Activated CD4-positive, alpha-beta memory T cell treated with anti-CD3 and anti-CD28 coated beads for 36 hours (primary cell): ENCODE measurements at regions of chr2 and their contacts with region 1.

Region 1: GRCh38 chr2:143162123-143162837 is 33.1 kb downstream of the ARHGAP15 start:
- DNase-seq: peak; percentile 68
- H3K4me3 Mint-ChIP-seq: no peak overlapping the region
- H3K27ac Mint-ChIP-seq: peak overlapping the region; percentile 14
- H3K4me1 Mint-ChIP-seq: peaks cover 77% of the 10 kb centered on the region
- H3K27me3 Mint-ChIP-seq: no peaks in the 10 kb centered on the region

Region 2: GRCh38 chr2:143110758-143111428 is 51.4 kb before region 1 on chr2:
- CTCF ChIA-PET with region 1: interaction called, 44 read pairs
- POLR2A ChIA-PET with region 1: interaction called, 5 read pairs
- intact Hi-C with region 1: loop called (anchors 1 kb)
- DNase-seq: peak; percentile 70
- H3K4me3 Mint-ChIP-seq: peak overlapping the region; percentile 56
- H3K27ac Mint-ChIP-seq: peak overlapping the region; percentile 86
- H3K4me1 Mint-ChIP-seq: peaks cover 31% of the 10 kb centered on the region
- H3K27me3 Mint-ChIP-seq: no peaks in the 10 kb centered on the region

Region 3: DNA sequence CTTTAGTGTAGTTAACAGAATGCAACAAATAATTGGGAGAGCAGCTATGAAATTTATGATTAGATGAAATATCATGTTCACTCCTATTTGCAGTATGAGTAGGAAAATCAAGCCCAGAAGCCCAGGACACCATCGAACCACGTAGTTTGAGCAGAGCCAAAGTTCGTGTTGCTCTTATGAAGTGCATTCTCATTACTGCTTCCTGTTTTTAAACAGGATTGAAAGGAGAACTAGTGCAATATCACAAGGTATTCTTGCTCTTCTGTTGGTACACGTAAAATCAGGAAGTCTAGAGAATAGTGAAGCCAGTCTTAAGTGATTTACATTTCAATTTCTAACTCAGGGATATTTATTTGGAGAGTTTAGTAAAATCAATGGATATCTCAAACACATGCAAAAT is 12.0 kb before region 1 on chr2:
- CTCF ChIA-PET with region 1: interaction called, 14 read pairs
- POLR2A ChIA-PET with region 1: interaction called, 3 read pairs
- intact Hi-C with region 1: no loop called
- DNase-seq: peak; percentile 27
- H3K4me3 Mint-ChIP-seq: peak overlapping the region; percentile 40
- H3K27ac Mint-ChIP-seq: peak overlapping the region; percentile 72
- H3K4me1 Mint-ChIP-seq: peaks cover 86% of the 10 kb centered on the region
- H3K27me3 Mint-ChIP-seq: no peaks in the 10 kb centered on the region

Region 4: DNA sequence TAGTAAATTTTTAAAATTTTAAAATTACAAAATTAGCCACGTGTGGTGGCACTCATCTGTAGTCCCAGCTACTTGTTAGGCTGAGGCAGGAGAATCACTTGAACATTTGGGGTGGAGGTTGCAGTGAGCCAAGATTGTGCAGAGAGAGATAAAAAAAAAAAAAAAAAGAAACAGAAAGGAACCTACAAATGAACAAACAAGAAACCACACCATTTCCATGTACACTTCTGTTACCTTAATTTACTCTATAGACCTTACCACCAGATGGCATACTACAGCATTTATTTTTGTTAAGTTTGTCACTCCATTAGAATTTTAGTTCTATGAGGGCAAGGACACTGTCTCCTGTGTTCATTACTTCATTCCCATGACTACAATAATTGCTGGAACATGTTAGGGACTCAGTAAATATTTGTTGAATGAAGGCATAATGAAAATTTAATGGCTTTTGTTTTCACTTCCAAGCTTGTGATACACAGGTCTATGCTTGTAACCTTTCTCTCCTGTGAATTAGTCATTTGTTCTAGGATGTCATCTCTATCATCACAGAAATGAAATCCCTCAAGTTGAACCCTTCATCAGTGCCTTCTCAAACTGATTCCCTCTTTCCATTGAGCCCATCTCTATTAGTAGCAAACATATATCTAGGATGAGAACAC is 43.0 kb after region 1 on chr2:
- CTCF ChIA-PET with region 1: interaction called, 15 read pairs
- POLR2A ChIA-PET with region 1: no interaction called
- intact Hi-C with region 1: no loop called
- DNase-seq: no peak
- H3K4me3 Mint-ChIP-seq: no peak overlapping the region
- H3K27ac Mint-ChIP-seq: peak overlapping the region; percentile 63
- H3K4me1 Mint-ChIP-seq: peaks cover 41% of the 10 kb centered on the region
- H3K27me3 Mint-ChIP-seq: no peaks in the 10 kb centered on the region

Region 5: GRCh38 chr2:143226714-143227541 is 64.6 kb after region 1 on chr2:
- CTCF ChIA-PET with region 1: interaction called, 43 read pairs
- POLR2A ChIA-PET with region 1: interaction called, 3 read pairs
- intact Hi-C with region 1: loop called (anchors 1 kb)
- DNase-seq: no peak
- H3K4me3 Mint-ChIP-seq: no peak overlapping the region
- H3K27ac Mint-ChIP-seq: no peak overlapping the region
- H3K4me1 Mint-ChIP-seq: peaks cover 38% of the 10 kb centered on the region
- H3K27me3 Mint-ChIP-seq: no peaks in the 10 kb centered on the region

Region 6: DNA sequence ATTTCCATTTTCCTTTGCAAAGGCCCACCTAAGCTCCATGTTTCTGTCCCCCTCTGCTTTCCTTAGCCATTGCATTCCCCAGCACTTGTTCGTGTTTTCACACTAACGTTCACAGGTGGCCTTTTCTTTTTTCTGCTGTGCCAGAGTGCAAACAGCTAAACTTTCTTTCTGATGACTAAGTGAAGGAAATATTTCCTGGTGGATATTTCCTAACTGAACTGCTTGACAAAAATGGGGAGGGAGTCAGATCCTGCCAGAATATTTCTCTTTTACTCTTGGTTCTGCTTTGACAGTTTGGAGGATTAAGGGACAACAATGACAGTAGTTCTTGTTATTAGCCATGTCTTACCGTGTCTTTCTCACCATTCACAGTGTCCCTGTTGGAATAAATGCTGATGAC is 310.9 kb after region 1 on chr2:
- CTCF ChIA-PET with region 1: no interaction called
- POLR2A ChIA-PET with region 1: no interaction called
- intact Hi-C with region 1: no loop called
- DNase-seq: no peak
- H3K4me3 Mint-ChIP-seq: no peak overlapping the region
- H3K27ac Mint-ChIP-seq: no peak overlapping the region
- H3K4me1 Mint-ChIP-seq: peaks cover 56% of the 10 kb centered on the region
- H3K27me3 Mint-ChIP-seq: no peaks in the 10 kb centered on the region